Natural killer cell (primary cell): ENCODE measurements at regions of chr4 and their contacts with region 1.

Region 1: GRCh38 chr4:7434766-7435150 is at the start of gene PSAPL1:
- DNase-seq: no peak
- ATAC-seq: peak in 2 of 3 donors; percentile 33 to 54
- H3K4me3 ChIP-seq: no peak within 1 kb of the TSS
- H3K4me3 Mint-ChIP-seq: peak within 1 kb of the TSS; percentile 74
- H3K27ac ChIP-seq: no peak within 1 kb of the TSS
- H3K27ac Mint-ChIP-seq: peak within 1 kb of the TSS; percentile 64 to 78
- H3K4me1 ChIP-seq: peaks cover 28% of the 10 kb centered on the region
- H3K4me1 Mint-ChIP-seq: peaks cover 15 to 21% of the 10 kb centered on the region in 2 donors
- H3K27me3 ChIP-seq: peaks cover 18% of the 10 kb centered on the region
- H3K27me3 Mint-ChIP-seq: peaks cover 41 to 48% of the 10 kb centered on the region in 2 donors
- CTCF ChIP-seq: no peak
- total RNA-seq, gene PSAPL1: not detected

Region 2: GRCh38 chr4:7524064-7524682 is 89.4 kb after region 1 on chr4:
- intact Hi-C with region 1: loop called (anchors 10 kb)
- DNase-seq: no peak
- ATAC-seq: peak; percentile 53 to 81 (median 76)
- H3K4me3 ChIP-seq: no peak overlapping the region
- H3K4me3 Mint-ChIP-seq: peak overlapping the region; percentile 87
- H3K27ac ChIP-seq: no peak overlapping the region
- H3K27ac Mint-ChIP-seq: peak overlapping the region; percentile 69 to 86
- H3K4me1 ChIP-seq: peaks cover 61% of the 10 kb centered on the region
- H3K4me1 Mint-ChIP-seq: peaks cover 66 to 89% of the 10 kb centered on the region in 2 donors
- H3K27me3 ChIP-seq: no peaks in the 10 kb centered on the region
- H3K27me3 Mint-ChIP-seq: no peaks in the 10 kb centered on the region
- CTCF ChIP-seq: no peak

Region 3: DNA sequence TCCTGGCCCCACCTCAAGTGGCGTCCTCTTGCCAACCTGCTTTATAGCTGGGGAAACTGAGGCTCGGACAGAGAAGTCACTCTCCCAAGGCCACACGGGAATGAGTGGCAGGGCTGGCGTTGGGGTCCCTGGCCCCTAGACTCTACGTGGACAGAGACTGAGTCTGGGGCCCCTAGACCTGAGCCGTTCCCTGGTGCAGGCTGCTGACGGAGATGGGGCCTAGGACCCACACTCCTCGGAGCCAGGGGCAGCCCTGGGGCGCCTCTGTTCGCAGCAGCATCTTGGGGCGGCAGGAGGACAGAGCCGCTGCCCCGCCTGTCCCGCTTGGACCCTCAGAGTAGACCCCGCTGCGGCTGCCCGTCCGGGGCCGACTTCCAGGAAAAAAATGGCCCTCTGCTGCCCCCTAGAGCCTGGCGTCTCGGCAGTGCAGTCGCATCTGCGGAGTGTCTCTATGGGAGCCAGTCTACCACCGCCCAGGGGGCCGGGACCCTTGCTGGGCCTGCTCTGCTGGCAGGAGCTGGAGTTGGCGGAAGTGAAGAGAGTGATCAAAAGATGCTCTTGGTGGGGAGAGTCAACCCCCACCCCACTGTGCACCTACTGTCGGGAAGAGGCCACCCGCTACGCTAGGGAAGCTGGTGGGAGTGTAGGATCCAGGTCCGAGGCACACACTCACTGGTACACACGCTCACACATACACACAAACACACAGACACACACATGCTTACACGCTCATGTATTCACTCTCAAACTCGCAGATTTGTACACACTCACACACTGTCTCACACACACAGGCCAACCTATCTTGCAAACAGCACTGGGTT is 284.8 kb after region 1 on chr4:
- intact Hi-C with region 1: loop called (anchors 10 kb)
- DNase-seq: peak; percentile 69 to 71
- ATAC-seq: peak; percentile 58 to 86 (median 79)
- H3K4me3 ChIP-seq: no peak overlapping the region
- H3K4me3 Mint-ChIP-seq: no peak overlapping the region
- H3K27ac ChIP-seq: no peak overlapping the region
- H3K27ac Mint-ChIP-seq: no peak overlapping the region
- H3K4me1 ChIP-seq: peaks cover 7% of the 10 kb centered on the region
- H3K4me1 Mint-ChIP-seq: peaks cover 24 to 42% of the 10 kb centered on the region in 2 donors
- H3K27me3 ChIP-seq: peaks cover 7% of the 10 kb centered on the region
- H3K27me3 Mint-ChIP-seq: peaks cover 18 to 20% of the 10 kb centered on the region in 2 donors
- CTCF ChIP-seq: peak; percentile 94